IMR-90 (cell line): ENCODE measurements at regions of chr17 and their contacts with region 1.

Region 1: DNA sequence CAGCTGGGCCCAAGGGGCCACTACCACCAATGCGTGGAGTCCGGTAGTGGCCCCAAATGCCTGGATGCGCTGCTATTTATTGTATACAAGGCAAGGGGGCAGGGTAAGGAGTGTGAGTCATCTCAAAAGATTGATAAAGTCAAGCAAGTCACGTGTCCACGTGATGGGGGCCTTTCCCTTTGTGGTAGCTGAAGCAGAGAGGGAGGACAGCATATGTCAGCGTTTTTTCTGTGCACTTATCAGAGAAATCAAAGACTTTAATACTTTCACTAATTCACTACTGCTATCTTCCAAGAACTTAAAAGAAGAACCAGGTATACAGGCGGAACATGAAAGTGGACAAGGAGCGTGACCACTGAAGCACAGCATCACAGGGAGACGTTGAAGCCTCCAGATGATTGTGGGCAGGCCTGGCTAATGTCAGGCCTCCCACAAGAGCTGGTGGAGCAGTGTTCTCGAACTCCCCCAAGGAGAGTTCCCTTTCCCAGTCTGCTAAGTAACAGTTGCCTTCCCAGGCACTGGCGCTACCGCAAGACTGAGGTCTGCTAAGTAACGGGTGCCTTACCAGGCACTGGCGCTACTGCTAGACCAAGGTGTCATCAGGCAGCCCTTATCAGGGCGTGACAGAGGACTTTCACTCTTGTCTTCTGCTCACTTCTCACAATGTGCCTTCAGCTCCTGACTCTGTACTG is 10.8 kb upstream of the ASB16 start:
- DNase-seq: peak; percentile 25
- ATAC-seq: no peak
- H3K4me3 ChIP-seq: no peak overlapping the region
- H3K27ac ChIP-seq: no peak overlapping the region
- H3K4me1 ChIP-seq: peaks cover 3% of the 10 kb centered on the region; the same call in 1 of the 2 replicates
- H3K27me3 ChIP-seq: no peaks in the 10 kb centered on the region
- CTCF ChIP-seq: no peak
- POLR2A ChIP-seq: no peak
- RAD21 ChIP-seq: no peak

Region 2: DNA sequence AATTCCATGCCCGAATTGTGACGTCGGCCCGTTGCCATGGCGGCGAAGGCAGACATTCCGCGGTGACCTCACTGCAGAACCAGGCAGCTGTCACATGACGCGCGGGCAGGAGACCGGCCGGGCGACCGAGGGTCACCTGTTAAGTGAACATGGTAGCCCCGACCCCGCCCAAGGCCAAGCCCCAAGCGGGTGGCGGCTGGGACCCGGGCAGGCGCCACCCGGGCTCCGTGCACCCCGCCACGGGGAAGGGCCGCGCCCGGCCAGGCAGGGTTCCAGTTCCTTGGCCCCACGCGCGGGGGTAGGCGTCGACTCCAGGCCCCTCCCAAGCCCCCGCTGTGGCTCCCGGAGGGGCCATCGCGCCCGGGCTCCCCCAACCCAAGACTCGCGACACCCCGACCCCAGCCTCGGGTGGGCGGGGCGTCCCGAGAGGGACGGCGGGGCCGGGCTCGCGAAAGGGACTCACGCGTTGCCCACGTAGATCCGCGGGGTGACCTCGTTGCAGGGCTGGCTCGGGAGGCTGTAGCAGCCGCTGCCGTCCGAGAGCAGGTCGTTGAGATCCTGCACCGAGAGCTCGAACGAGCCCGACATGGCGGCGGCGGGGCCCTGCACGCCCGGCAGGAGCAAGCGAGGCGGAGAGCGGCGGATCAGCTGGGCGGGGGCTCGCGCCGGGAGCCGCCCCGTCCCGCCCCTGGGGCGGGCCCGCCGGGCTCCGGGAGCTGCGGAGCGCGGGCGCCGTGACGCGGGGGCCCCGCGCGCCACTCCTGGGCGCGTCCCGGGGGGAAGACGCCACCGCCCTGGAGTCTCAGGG is 381.1 kb before region 1 on chr17 and contains the start of gene DUSP3:
- CTCF ChIA-PET with region 1: no interaction called
- POLR2A ChIA-PET with region 1: no interaction called
- dilution Hi-C with region 1: no loop called
- in situ Hi-C with region 1: no loop called
- intact Hi-C with region 1: loop called (anchors 5 kb)
- DNase-seq: peak; percentile 91
- ATAC-seq: peak; percentile 96
- H3K4me3 ChIP-seq: peak within 1 kb of the TSS; percentile 67
- H3K27ac ChIP-seq: peak within 1 kb of the TSS; percentile 85
- H3K4me1 ChIP-seq: peaks cover 4% of the 10 kb centered on the region
- H3K27me3 ChIP-seq: no peaks in the 10 kb centered on the region
- CTCF ChIP-seq: no peak
- POLR2A ChIP-seq: peak; percentile 89
- RAD21 ChIP-seq: no peak
- total RNA-seq, gene DUSP3: 40.9 and 42.5 TPM in 2 replicates

Region 3: GRCh38 chr17:44044067-44044466 is 115.6 kb before region 1 on chr17:
- CTCF ChIA-PET with region 1: no interaction called
- POLR2A ChIA-PET with region 1: no interaction called
- dilution Hi-C with region 1: no loop called
- in situ Hi-C with region 1: no loop called
- intact Hi-C with region 1: loop called (anchors 10 kb)
- DNase-seq: peak; percentile 65
- ATAC-seq: no peak; the same call in 1 of the 2 replicates
- H3K4me3 ChIP-seq: no peak overlapping the region
- H3K27ac ChIP-seq: peak overlapping the region; percentile 57; the same call in 1 of the 2 replicates
- H3K4me1 ChIP-seq: peaks cover 12% of the 10 kb centered on the region
- H3K27me3 ChIP-seq: no peaks in the 10 kb centered on the region
- CTCF ChIP-seq: no peak
- POLR2A ChIP-seq: no peak
- RAD21 ChIP-seq: no peak

Region 4: DNA sequence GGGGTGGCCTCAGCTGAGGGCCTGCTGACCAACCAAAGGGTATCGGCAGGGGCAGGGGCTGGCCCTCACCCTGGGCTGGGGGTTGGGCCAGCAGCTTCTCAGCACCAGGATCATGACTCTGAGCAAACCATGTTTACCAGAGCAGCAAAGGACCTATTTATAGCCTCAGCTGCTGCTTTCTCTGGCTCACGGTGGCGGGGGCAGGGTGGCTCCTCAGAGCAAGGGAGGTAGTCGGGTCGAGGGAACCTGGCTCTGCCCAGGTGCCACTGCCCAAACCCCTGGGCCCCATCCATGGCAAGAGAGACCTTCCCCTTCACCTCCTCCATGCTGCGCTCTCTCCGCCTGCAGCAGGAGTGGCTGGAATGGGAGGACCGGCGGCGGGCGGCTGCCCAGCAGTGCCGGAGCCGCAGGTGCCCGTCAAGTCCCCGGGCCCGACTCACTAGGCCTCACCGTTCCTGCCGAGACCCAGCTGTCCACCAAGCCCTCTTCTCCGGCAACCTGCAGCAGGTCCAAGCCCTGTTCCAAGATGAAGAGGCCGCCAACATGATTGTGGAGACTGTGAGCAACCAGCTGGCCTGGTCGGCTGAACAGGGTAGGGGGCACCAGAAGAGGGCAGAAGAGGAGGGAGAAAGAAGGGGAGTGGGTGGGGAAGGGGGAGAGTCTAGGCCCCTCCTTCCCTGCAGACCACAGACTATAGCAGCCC is 11.0 kb after region 1 on chr17 and contains the start of gene ASB16:
- CTCF ChIA-PET with region 1: interaction called, 10 read pairs
- POLR2A ChIA-PET with region 1: no interaction called
- dilution Hi-C with region 1: no loop called
- in situ Hi-C with region 1: no loop called
- intact Hi-C with region 1: no loop called
- DNase-seq: peak; percentile 55
- ATAC-seq: peak; percentile 72
- H3K4me3 ChIP-seq: no peak within 1 kb of the TSS
- H3K27ac ChIP-seq: no peak within 1 kb of the TSS
- H3K4me1 ChIP-seq: peaks cover 11% of the 10 kb centered on the region
- H3K27me3 ChIP-seq: no peaks in the 10 kb centered on the region
- CTCF ChIP-seq: no peak
- POLR2A ChIP-seq: no peak
- RAD21 ChIP-seq: no peak
- total RNA-seq, gene ASB16: not detected in 2 replicates